OCI-LY7 (cell line): ENCODE measurements at regions of chr10 and their contacts with region 1.

Region 1: DNA sequence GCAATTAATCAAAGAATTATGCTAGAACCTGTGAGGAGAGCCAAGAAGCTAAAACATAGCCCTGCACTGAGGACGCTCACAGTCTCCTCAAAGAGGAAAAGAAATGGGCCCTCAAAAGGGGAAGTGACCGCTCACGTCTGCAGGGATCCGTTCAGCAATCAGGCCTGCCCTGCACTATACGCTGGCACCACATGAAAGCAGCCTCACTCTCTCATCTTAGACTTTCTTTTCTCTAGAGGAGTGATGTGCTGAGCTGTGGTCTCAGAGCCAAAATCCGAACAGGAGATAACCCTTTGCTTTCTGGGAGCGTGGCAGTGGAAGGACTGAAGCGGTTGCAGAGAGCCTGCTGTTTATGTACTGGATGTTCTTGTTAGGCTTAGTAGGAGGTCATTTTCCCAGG is 6.3 kb upstream of the IL2RA start:
- DNase-seq: peak; percentile 90
- H3K4me3 ChIP-seq: peak overlapping the region; percentile 47
- H3K27ac ChIP-seq: peak overlapping the region; percentile 98
- H3K4me1 ChIP-seq: peaks cover 81% of the 10 kb centered on the region
- CTCF ChIP-seq: no peak

Region 2: DNA sequence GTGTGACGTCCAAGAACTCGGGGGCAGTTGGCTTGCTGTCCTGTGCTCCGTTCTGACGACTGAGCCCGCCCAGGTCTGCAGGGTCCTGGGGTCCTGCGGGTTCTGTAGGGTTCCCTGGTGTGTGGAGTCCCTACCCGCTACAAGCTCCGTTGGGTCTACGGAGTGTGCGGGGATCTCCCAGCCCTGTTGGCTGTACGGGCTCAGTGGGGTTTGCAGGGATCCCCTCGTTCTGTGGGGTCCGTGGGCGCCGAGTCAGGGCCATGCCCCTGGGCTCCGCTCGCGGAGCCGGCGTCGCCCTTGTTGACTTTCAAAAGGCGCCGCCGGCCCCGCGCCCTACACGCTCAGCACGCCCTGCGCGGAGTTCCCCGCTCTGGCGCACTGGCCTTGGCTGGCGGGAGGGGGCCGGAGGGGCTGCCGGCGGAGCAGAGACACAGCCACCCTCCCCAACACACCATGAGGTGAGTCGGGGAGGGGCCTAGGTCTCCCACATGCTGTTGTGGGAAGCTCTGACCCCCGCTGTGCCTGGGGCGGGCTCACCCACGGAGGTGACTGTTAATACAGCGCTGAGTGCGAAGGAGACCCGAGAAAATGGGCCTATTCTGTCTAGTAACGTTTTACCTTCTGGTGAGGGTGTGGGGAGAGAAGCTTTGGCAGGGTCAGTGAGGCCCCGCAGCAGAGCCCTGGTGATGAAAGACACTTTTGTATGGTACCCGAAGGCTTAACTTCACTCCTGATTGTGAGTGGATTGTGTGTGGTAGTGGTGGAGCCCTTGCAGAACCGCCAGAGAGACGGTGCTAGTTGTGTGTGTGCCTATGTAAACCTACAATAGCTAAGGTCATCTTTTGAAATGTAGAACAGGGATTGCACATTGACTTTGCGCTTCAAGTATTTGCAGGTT is 375.7 kb before region 1 on chr10:
- CTCF ChIA-PET with region 1: no interaction called
- POLR2A ChIA-PET with region 1: no interaction called
- intact Hi-C with region 1: loop called (anchors 10 kb)
- DNase-seq: peak; percentile 87
- H3K4me3 ChIP-seq: peak overlapping the region; percentile 70
- H3K27ac ChIP-seq: peak overlapping the region; percentile 92
- H3K4me1 ChIP-seq: peaks cover 91% of the 10 kb centered on the region
- CTCF ChIP-seq: no peak

Region 3: DNA sequence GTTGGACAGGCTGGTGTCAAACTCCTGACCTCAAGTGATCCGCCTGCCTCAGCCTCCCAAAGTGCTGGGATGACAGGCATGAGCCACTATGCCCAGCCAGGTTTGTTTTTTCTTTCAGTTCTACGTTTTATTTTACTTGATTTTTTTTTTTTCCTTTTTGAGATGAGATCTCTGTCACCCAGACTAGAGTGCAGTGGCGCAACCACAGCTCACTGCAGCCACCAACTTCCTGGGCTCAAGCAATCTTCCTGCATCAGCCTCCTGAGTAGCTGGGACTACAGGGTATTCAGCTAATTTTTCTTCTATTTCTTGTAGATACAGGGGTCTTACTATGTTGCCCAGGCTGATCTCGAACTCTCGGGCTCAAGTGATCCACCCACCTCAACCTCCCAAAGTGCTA is 279.5 kb before region 1 on chr10:
- CTCF ChIA-PET with region 1: no interaction called
- POLR2A ChIA-PET with region 1: no interaction called
- intact Hi-C with region 1: no loop called
- DNase-seq: no peak
- H3K4me3 ChIP-seq: no peak overlapping the region
- H3K27ac ChIP-seq: no peak overlapping the region
- H3K4me1 ChIP-seq: no peaks in the 10 kb centered on the region
- CTCF ChIP-seq: no peak

Region 4: DNA sequence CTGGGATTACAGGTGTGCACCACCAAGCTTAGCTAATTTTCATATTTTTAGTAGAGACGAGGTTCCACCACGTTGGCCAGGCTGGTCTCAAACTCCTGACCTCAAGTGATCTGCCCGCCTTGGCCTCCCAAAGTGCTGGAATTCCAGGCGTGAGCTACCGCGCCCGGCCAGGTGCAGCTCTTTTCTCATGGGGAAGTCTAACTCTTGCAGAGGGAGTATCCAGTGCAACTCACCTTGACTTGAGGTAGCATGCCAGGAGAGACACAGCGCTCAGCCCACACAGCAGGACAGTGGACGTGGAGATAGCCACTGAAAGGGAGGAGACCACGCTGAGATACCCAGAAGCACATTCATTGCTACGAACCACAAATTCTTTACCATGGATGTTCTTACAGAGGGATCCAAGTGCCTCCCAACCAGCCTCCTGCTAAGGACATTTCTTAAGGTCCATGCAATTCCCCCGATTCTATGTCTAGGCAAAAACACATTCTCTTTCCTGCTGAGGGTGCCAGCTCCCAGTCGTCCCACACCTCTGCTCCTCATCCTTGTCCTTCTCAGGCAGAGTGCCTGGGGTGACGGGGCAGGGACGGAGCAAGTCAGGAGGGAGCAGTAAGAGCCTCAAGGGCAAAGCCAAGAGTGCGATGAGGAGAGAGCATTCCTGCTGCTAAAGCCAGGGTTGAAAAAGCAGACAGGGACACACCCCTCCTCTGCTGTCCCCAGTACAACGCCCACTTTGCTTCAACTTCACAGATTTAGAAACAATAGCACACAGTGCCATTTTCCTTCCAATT is 112.1 kb before region 1 on chr10:
- CTCF ChIA-PET with region 1: no interaction called
- POLR2A ChIA-PET with region 1: no interaction called
- intact Hi-C with region 1: no loop called
- DNase-seq: no peak
- H3K4me3 ChIP-seq: no peak overlapping the region
- H3K27ac ChIP-seq: no peak overlapping the region
- H3K4me1 ChIP-seq: no peaks in the 10 kb centered on the region
- CTCF ChIP-seq: no peak

Region 5: DNA sequence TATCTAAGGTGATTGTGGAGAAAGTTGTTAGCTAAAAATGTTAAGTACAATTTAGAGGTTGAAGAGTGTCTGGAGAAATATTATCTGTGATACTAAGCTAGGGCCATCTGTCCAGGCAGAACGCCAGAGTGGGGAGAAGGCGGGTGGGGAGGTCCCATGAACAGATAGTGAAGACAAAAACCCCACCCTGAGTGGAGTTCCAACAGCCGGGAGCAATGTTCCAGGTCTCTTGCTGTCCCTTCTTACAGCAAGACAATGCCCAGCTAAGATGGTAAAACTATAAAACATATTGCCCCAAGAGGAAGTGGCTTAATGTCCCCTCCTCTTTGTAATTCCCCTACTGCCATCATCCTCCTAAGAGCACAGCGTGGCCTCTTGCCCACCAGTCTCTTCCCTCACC is 80.7 kb before region 1 on chr10:
- CTCF ChIA-PET with region 1: no interaction called
- POLR2A ChIA-PET with region 1: no interaction called
- intact Hi-C with region 1: no loop called
- DNase-seq: no peak
- H3K4me3 ChIP-seq: no peak overlapping the region
- H3K27ac ChIP-seq: no peak overlapping the region
- H3K4me1 ChIP-seq: no peaks in the 10 kb centered on the region
- CTCF ChIP-seq: no peak

Region 6: GRCh38 chr10:6036861-6037321 is 31.5 kb before region 1 on chr10:
- CTCF ChIA-PET with region 1: interaction called, 3 read pairs
- POLR2A ChIA-PET with region 1: interaction called, 13 read pairs
- intact Hi-C with region 1: no loop called
- DNase-seq: peak; percentile 70
- H3K4me3 ChIP-seq: peak overlapping the region; percentile 40
- H3K27ac ChIP-seq: peak overlapping the region; percentile 73
- H3K4me1 ChIP-seq: peaks cover 76% of the 10 kb centered on the region
- CTCF ChIP-seq: no peak

Region 7: GRCh38 chr10:6050801-6051445 is 17.5 kb before region 1 on chr10:
- CTCF ChIA-PET with region 1: interaction called, 5 read pairs
- POLR2A ChIA-PET with region 1: interaction called, 110 read pairs
- intact Hi-C with region 1: loop called (anchors 1 kb)
- DNase-seq: peak; percentile 90
- H3K4me3 ChIP-seq: peak overlapping the region; percentile 63
- H3K27ac ChIP-seq: peak overlapping the region; percentile 94
- H3K4me1 ChIP-seq: peaks cover 92% of the 10 kb centered on the region
- CTCF ChIP-seq: peak; percentile 78

Region 8: GRCh38 chr10:6083523-6084475 is 15.4 kb after region 1 on chr10:
- CTCF ChIA-PET with region 1: interaction called, 15 read pairs
- POLR2A ChIA-PET with region 1: interaction called, 40 read pairs
- intact Hi-C with region 1: loop called (anchors 1 kb)
- DNase-seq: no peak
- H3K4me3 ChIP-seq: no peak overlapping the region
- H3K27ac ChIP-seq: no peak overlapping the region
- H3K4me1 ChIP-seq: peaks cover 63% of the 10 kb centered on the region
- CTCF ChIP-seq: no peak

Region 9: GRCh38 chr10:6328699-6329423 is 260.4 kb after region 1 on chr10:
- CTCF ChIA-PET with region 1: no interaction called
- POLR2A ChIA-PET with region 1: no interaction called
- intact Hi-C with region 1: no loop called
- DNase-seq: no peak
- H3K4me3 ChIP-seq: peak overlapping the region; percentile 10
- H3K27ac ChIP-seq: peak overlapping the region; percentile 46
- H3K4me1 ChIP-seq: peaks cover 32% of the 10 kb centered on the region
- CTCF ChIP-seq: no peak